Naive thymus-derived CD4-positive, alpha-beta T cell (primary cell): ENCODE measurements at regions of chr3 and their contacts with region 1.

Region 1: GRCh38 chr3:160941885-160942494 is 163.2 kb downstream of the B3GALNT1 start:
- DNase-seq: peak; percentile 26 to 73 (median 61)
- ATAC-seq: peak; percentile 77
- H3K4me3 ChIP-seq: no peak overlapping the region
- H3K4me3 Mint-ChIP-seq: no peak overlapping the region
- H3K27ac ChIP-seq: no peak overlapping the region
- H3K27ac Mint-ChIP-seq: no peak overlapping the region
- H3K4me1 ChIP-seq: no peaks in the 10 kb centered on the region
- H3K4me1 Mint-ChIP-seq: peaks cover 0 to 5% (median 3%) of the 10 kb centered on the region in 7 donors
- H3K27me3 ChIP-seq: no peaks in the 10 kb centered on the region
- H3K27me3 Mint-ChIP-seq: peaks cover 0 to 7% (median 0%) of the 10 kb centered on the region in 5 donors

Region 2: GRCh38 chr3:159185443-159186050 is 1756.4 kb before region 1 on chr3:
- CTCF ChIA-PET with region 1: no interaction called
- POLR2A ChIA-PET with region 1: no interaction called
- intact Hi-C with region 1: no loop called
- DNase-seq: no peak
- ATAC-seq: no peak
- H3K4me3 ChIP-seq: no peak overlapping the region
- H3K4me3 Mint-ChIP-seq: no peak overlapping the region
- H3K27ac ChIP-seq: no peak overlapping the region
- H3K27ac Mint-ChIP-seq: no peak overlapping the region
- H3K4me1 ChIP-seq: no peaks in the 10 kb centered on the region
- H3K4me1 Mint-ChIP-seq: no peaks in the 10 kb centered on the region
- H3K27me3 ChIP-seq: no peaks in the 10 kb centered on the region
- H3K27me3 Mint-ChIP-seq: peaks cover 0 to 4% (median 0%) of the 10 kb centered on the region in 5 donors

Region 3: GRCh38 chr3:160686955-160687535 is 254.9 kb before region 1 on chr3:
- CTCF ChIA-PET with region 1: interaction called, 6 read pairs
- POLR2A ChIA-PET with region 1: no interaction called
- intact Hi-C with region 1: loop called (anchors 1 kb)
- DNase-seq: peak in 1 of 9 donors; percentile 6
- ATAC-seq: peak; percentile 40
- H3K4me3 ChIP-seq: no peak overlapping the region
- H3K4me3 Mint-ChIP-seq: no peak overlapping the region
- H3K27ac ChIP-seq: no peak overlapping the region
- H3K27ac Mint-ChIP-seq: no peak overlapping the region
- H3K4me1 ChIP-seq: no peaks in the 10 kb centered on the region
- H3K4me1 Mint-ChIP-seq: no peaks in the 10 kb centered on the region
- H3K27me3 ChIP-seq: no peaks in the 10 kb centered on the region
- H3K27me3 Mint-ChIP-seq: peaks cover 0 to 7% (median 0%) of the 10 kb centered on the region in 5 donors

Region 4: GRCh38 chr3:160754855-160755747 is 186.9 kb before region 1 on chr3:
- CTCF ChIA-PET with region 1: interaction called, 5 read pairs
- POLR2A ChIA-PET with region 1: no interaction called
- intact Hi-C with region 1: loop called (anchors 2 kb)
- DNase-seq: peak; percentile 76 to 88 (median 85)
- ATAC-seq: peak; percentile 92
- H3K4me3 ChIP-seq: peak overlapping the region; percentile 73
- H3K4me3 Mint-ChIP-seq: peak overlapping the region; percentile 88 to 99 (median 96)
- H3K27ac ChIP-seq: peak overlapping the region; percentile 69
- H3K27ac Mint-ChIP-seq: peak overlapping the region; percentile 88 to 97 (median 94)
- H3K4me1 ChIP-seq: peaks cover 10 to 11% of the 10 kb centered on the region in 2 donors
- H3K4me1 Mint-ChIP-seq: peaks cover 27 to 36% (median 30%) of the 10 kb centered on the region in 7 donors
- H3K27me3 ChIP-seq: peaks cover 0 to 6% of the 10 kb centered on the region in 2 donors
- H3K27me3 Mint-ChIP-seq: peaks cover 5 to 41% (median 10%) of the 10 kb centered on the region in 5 donors

Region 5: GRCh38 chr3:161274719-161275298 is 332.8 kb after region 1 on chr3:
- CTCF ChIA-PET with region 1: no interaction called
- POLR2A ChIA-PET with region 1: no interaction called
- intact Hi-C with region 1: loop called in 1 of 2 experiments (anchors 5 kb)
- DNase-seq: peak in 8 of 9 donors; percentile 13 to 52 (median 34)
- ATAC-seq: peak; percentile 57
- H3K4me3 ChIP-seq: no peak overlapping the region
- H3K4me3 Mint-ChIP-seq: no peak overlapping the region
- H3K27ac ChIP-seq: no peak overlapping the region
- H3K27ac Mint-ChIP-seq: peak overlapping the region in 1 of 9 donors; percentile 59
- H3K4me1 ChIP-seq: no peaks in the 10 kb centered on the region
- H3K4me1 Mint-ChIP-seq: peaks cover 0 to 9% (median 3%) of the 10 kb centered on the region in 7 donors
- H3K27me3 ChIP-seq: no peaks in the 10 kb centered on the region
- H3K27me3 Mint-ChIP-seq: peaks cover 0 to 4% (median 0%) of the 10 kb centered on the region in 5 donors

Region 6: DNA sequence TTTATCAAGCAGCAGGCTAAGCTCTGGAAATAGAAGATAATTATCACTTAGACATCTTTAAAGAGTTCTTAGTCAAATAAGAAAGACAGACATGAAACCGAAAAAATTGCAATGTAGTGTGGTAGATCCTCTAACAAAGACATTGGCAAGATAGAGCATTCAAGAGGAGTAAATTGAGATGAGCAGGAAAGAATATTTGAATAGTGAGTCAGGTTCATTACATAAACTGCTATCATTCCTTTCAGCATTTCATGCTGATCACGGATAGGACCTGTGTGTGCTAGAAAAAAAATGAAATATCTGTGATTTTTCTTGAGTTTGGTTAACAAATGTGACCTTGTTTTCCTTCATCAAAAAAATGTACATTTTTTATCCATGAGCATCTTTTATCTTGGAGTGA is 1015.5 kb after region 1 on chr3:
- CTCF ChIA-PET with region 1: no interaction called
- POLR2A ChIA-PET with region 1: no interaction called
- intact Hi-C with region 1: no loop called
- DNase-seq: no peak
- ATAC-seq: no peak
- H3K4me3 ChIP-seq: no peak overlapping the region
- H3K4me3 Mint-ChIP-seq: no peak overlapping the region
- H3K27ac ChIP-seq: no peak overlapping the region
- H3K27ac Mint-ChIP-seq: no peak overlapping the region
- H3K4me1 ChIP-seq: no peaks in the 10 kb centered on the region
- H3K4me1 Mint-ChIP-seq: no peaks in the 10 kb centered on the region
- H3K27me3 ChIP-seq: peaks cover 0 to 3% of the 10 kb centered on the region in 2 donors
- H3K27me3 Mint-ChIP-seq: no peaks in the 10 kb centered on the region